ENCODE measurements at regions of chr18 and their contacts with region 1.

Region 1: GRCh38 chr18:36693931-36694620 is 134.7 kb downstream of the TPGS2 start:
- DNase-seq: peak in 1 of 4 donors; percentile 12
- ATAC-seq: no peak
- H3K4me3 ChIP-seq: no peak overlapping the region
- H3K27ac ChIP-seq: no peak overlapping the region
- H3K4me1 ChIP-seq: no peaks in the 10 kb centered on the region
- H3K27me3 ChIP-seq: no peaks in the 10 kb centered on the region
- CTCF ChIP-seq: no peak
- POLR2A ChIP-seq: no peak

Region 2: DNA sequence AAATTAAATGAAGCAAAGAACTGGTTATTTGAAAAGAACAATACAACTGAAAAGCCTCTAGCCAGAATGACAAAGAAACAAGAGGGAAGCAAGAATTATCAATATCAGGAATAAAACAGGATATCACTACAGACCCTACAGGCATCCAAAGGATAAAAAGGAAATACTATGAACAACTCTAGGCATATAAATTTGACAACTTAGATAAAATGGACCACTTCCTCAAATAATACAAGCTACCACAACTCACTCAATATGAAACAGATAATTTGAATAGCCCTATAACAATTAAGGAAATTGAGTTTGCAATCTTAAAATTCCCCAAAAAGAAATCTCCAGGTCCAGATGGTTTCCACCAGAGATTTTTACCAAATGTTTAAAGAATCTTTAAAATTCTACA is 646.6 kb before region 1 on chr18:
- intact Hi-C with region 1: no loop called
- DNase-seq: no peak
- ATAC-seq: no peak
- H3K4me3 ChIP-seq: no peak overlapping the region
- H3K27ac ChIP-seq: no peak overlapping the region
- H3K4me1 ChIP-seq: peaks cover 12% of the 10 kb centered on the region
- H3K27me3 ChIP-seq: no peaks in the 10 kb centered on the region
- CTCF ChIP-seq: no peak
- POLR2A ChIP-seq: no peak

Region 3: GRCh38 chr18:36809590-36810381 is 115.7 kb after region 1 on chr18:
- intact Hi-C with region 1: loop called (anchors 5 kb)
- DNase-seq: peak; percentile 26 to 61 (median 52)
- ATAC-seq: peak; percentile 87
- H3K4me3 ChIP-seq: no peak overlapping the region
- H3K27ac ChIP-seq: no peak overlapping the region
- H3K4me1 ChIP-seq: peaks cover 6% of the 10 kb centered on the region
- H3K27me3 ChIP-seq: no peaks in the 10 kb centered on the region
- CTCF ChIP-seq: peak; percentile 61 to 82 (median 72)
- POLR2A ChIP-seq: no peak

Measured in body of pancreas (tissue), 4 donors.